Activated B cell treated with CpG ODN at 0.5 μM for 24 hours (primary cell): ENCODE measurements at regions of chr6 and their contacts with region 1.

Region 1: DNA sequence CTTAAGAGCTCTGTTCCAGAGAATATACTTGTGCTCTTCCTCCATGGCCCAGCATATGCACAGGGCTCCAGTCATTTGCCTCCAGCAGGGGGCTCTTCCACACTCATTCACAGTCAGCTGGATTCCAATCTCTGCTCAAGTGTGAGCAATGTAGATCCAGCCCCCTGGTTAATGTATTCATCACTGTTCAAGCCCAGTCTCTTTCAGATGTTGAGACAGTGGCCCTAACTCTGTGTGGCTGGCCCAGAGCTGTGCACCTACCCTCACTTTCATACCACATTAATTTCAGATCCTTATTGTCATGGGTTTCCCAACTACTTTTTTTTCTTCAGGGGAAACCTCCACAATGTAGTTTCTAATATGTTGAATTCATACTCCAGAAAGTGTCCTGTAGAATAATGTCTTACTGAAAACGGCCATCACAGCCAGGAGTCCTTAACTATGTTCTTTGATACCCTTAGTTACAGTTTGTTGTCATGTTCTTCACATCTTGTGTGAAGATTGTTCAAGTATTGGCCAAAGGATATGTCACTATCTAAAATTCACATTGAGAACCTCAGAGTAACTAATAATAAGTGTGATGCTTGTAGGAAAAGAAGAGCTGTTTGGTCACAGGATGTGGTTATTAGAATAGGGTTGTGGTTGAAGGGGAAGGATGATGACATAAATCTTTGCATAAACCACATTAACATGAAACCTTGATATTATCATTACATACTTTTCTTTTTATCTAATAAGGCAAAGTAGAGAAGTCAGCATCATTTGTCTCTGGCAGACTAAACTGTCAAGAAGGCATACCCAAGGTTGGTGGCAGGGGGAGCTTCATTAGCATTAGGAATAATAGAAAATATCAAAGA is 14.4 kb upstream of the HLA-DQA1 start:
- DNase-seq: peak; percentile 42
- ATAC-seq: peak; percentile 75
- H3K4me3 Mint-ChIP-seq: peak overlapping the region; percentile 80
- H3K27ac Mint-ChIP-seq: peak overlapping the region; percentile 100
- H3K4me1 Mint-ChIP-seq: peaks cover 75% of the 10 kb centered on the region
- H3K27me3 Mint-ChIP-seq: no peaks in the 10 kb centered on the region
- CTCF ChIP-seq: no peak

Region 2: GRCh38 chr6:32439602-32440214 is 183.1 kb before region 1 on chr6 and contains the start of gene HLA-DRA:
- CTCF ChIA-PET with region 1: interaction called, 6 read pairs
- POLR2A ChIA-PET with region 1: interaction called, 80 read pairs
- intact Hi-C with region 1: loop called (anchors 1 kb)
- DNase-seq: no peak
- ATAC-seq: peak; percentile 72
- H3K4me3 Mint-ChIP-seq: peak within 1 kb of the TSS; percentile 96
- H3K27ac Mint-ChIP-seq: peak within 1 kb of the TSS; percentile 98
- H3K4me1 Mint-ChIP-seq: peaks cover 80% of the 10 kb centered on the region
- H3K27me3 Mint-ChIP-seq: no peaks in the 10 kb centered on the region
- CTCF ChIP-seq: no peak
- total RNA-seq, gene HLA-DRA: 2,835 and 3,035 TPM in 2 replicates

Region 3: GRCh38 chr6:32589598-32590449 is 32.9 kb before region 1 on chr6 and contains the start of gene HLA-DRB1:
- CTCF ChIA-PET with region 1: interaction called, 3 read pairs
- POLR2A ChIA-PET with region 1: interaction called, 61 read pairs
- intact Hi-C with region 1: loop called (anchors 1 kb)
- DNase-seq: no peak
- ATAC-seq: peak; percentile 93
- H3K4me3 Mint-ChIP-seq: peak within 1 kb of the TSS; percentile 91
- H3K27ac Mint-ChIP-seq: peak within 1 kb of the TSS; percentile 98
- H3K4me1 Mint-ChIP-seq: peaks cover 66% of the 10 kb centered on the region
- H3K27me3 Mint-ChIP-seq: no peaks in the 10 kb centered on the region
- CTCF ChIP-seq: no peak
- total RNA-seq, gene HLA-DRB1: 621 and 630 TPM in 2 replicates

Region 4: GRCh38 chr6:32609731-32610640 is 12.8 kb before region 1 on chr6:
- CTCF ChIA-PET with region 1: interaction called, 6 read pairs
- POLR2A ChIA-PET with region 1: interaction called, 312 read pairs
- intact Hi-C with region 1: loop called (anchors 1 kb)
- DNase-seq: no peak
- ATAC-seq: peak; percentile 84
- H3K4me3 Mint-ChIP-seq: no peak overlapping the region
- H3K27ac Mint-ChIP-seq: no peak overlapping the region
- H3K4me1 Mint-ChIP-seq: peaks cover 56% of the 10 kb centered on the region
- H3K27me3 Mint-ChIP-seq: no peaks in the 10 kb centered on the region
- CTCF ChIP-seq: no peak

Region 5: GRCh38 chr6:32666420-32667300 is 43.9 kb after region 1 on chr6 and contains the start of gene HLA-DQB1:
- CTCF ChIA-PET with region 1: interaction called, 3 read pairs
- POLR2A ChIA-PET with region 1: interaction called, 47 read pairs
- intact Hi-C with region 1: loop called (anchors 1 kb)
- DNase-seq: no peak
- ATAC-seq: peak; percentile 65
- H3K4me3 Mint-ChIP-seq: peak within 1 kb of the TSS; percentile 90
- H3K27ac Mint-ChIP-seq: peak within 1 kb of the TSS; percentile 94
- H3K4me1 Mint-ChIP-seq: peaks cover 65% of the 10 kb centered on the region
- H3K27me3 Mint-ChIP-seq: no peaks in the 10 kb centered on the region
- CTCF ChIP-seq: no peak
- total RNA-seq, gene HLA-DQB1: 262 and 310 TPM in 2 replicates

Region 6: DNA sequence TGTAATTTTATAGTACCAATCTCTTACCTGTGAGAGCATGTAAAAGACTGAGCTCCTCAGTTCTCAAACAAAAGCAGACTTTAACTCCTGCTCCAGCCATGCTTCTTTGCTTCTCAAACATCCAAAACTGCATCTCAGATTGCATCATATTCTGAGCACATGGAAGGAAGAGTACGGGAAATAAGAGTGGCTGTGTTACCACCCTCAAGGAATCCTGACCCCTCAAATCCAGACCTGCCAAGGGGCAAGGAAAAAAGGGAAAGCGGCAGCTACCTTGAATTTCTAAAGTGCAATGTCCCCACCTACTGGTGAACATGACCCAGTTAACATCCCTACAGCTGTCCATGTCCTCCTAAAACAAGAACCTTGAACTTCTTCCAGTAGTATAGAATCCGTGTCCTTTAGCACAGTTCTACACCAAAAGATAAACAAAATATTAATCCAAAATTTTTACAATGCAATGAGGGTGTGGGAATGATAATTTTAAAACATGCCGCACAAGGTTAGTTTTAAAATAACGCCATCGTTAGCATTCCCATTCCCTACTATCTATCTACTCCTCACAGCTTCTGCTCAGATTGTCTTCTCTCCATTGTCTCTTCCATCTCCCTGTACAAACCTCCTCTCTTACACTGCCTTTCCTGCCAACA is 77.7 kb after region 1 on chr6:
- CTCF ChIA-PET with region 1: interaction called, 3 read pairs
- POLR2A ChIA-PET with region 1: interaction called, 11 read pairs
- intact Hi-C with region 1: loop called (anchors 2 kb)
- DNase-seq: no peak
- ATAC-seq: peak; percentile 80
- H3K4me3 Mint-ChIP-seq: peak overlapping the region; percentile 86
- H3K27ac Mint-ChIP-seq: peak overlapping the region; percentile 91
- H3K4me1 Mint-ChIP-seq: peaks cover 32% of the 10 kb centered on the region
- H3K27me3 Mint-ChIP-seq: no peaks in the 10 kb centered on the region
- CTCF ChIP-seq: peak; percentile 32